PC-9 (cell line): ENCODE measurements at regions of chr16 and their contacts with region 1.

Region 1: GRCh38 chr16:74296432-74297144 is at the start of gene PSMD7:
- DNase-seq: peak; percentile 82 to 88
- H3K4me3 ChIP-seq: peak within 1 kb of the TSS; percentile 98
- H3K27ac ChIP-seq: peak within 1 kb of the TSS; percentile 87
- H3K4me1 ChIP-seq: peaks cover 18% of the 10 kb centered on the region
- H3K27me3 ChIP-seq: no peaks in the 10 kb centered on the region
- CTCF ChIP-seq: no peak
- total RNA-seq, gene PSMD7: 98.2 and 128 TPM in 2 replicates

Region 2: GRCh38 chr16:74079232-74079586 is 217.4 kb before region 1 on chr16:
- CTCF ChIA-PET with region 1: no interaction called
- POLR2A ChIA-PET with region 1: no interaction called
- intact Hi-C with region 1: no loop called
- DNase-seq: no peak
- H3K4me3 ChIP-seq: no peak overlapping the region
- H3K27ac ChIP-seq: no peak overlapping the region
- H3K4me1 ChIP-seq: no peaks in the 10 kb centered on the region
- H3K27me3 ChIP-seq: peaks cover 22% of the 10 kb centered on the region
- CTCF ChIP-seq: no peak

Region 3: DNA sequence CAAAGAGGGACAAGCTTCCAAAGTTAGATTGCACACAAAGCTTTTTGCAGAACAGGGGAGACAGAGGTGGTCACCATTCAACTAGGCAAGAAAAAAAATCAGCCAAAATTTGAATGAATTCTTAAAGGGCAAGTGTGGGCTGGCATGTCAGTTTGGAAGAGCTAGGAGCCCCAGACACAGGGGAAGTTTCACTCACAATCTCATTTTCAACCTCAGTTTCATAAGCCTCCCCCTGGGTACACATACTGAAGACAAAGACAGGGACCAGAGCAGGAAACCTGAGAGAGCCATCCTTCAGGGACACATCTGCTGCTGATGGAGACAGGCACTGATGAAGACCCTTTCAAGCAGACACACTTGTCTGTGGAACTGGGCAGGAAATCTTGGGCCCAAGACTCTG is 106.3 kb before region 1 on chr16:
- CTCF ChIA-PET with region 1: no interaction called
- POLR2A ChIA-PET with region 1: no interaction called
- intact Hi-C with region 1: no loop called
- DNase-seq: no peak
- H3K4me3 ChIP-seq: no peak overlapping the region
- H3K27ac ChIP-seq: no peak overlapping the region
- H3K4me1 ChIP-seq: no peaks in the 10 kb centered on the region
- H3K27me3 ChIP-seq: peaks cover 26% of the 10 kb centered on the region; the same call in 1 of the 2 replicates
- CTCF ChIP-seq: no peak

Region 4: GRCh38 chr16:74372953-74373846 is 76.6 kb after region 1 on chr16:
- CTCF ChIA-PET with region 1: no interaction called
- POLR2A ChIA-PET with region 1: no interaction called
- intact Hi-C with region 1: loop called (anchors 2 kb)
- DNase-seq: no peak
- H3K4me3 ChIP-seq: no peak overlapping the region
- H3K27ac ChIP-seq: no peak overlapping the region
- H3K4me1 ChIP-seq: no peaks in the 10 kb centered on the region
- H3K27me3 ChIP-seq: peaks cover 19% of the 10 kb centered on the region
- CTCF ChIP-seq: no peak